ENCODE measurements at regions of chr13 and their contacts with region 1.

Region 1: DNA sequence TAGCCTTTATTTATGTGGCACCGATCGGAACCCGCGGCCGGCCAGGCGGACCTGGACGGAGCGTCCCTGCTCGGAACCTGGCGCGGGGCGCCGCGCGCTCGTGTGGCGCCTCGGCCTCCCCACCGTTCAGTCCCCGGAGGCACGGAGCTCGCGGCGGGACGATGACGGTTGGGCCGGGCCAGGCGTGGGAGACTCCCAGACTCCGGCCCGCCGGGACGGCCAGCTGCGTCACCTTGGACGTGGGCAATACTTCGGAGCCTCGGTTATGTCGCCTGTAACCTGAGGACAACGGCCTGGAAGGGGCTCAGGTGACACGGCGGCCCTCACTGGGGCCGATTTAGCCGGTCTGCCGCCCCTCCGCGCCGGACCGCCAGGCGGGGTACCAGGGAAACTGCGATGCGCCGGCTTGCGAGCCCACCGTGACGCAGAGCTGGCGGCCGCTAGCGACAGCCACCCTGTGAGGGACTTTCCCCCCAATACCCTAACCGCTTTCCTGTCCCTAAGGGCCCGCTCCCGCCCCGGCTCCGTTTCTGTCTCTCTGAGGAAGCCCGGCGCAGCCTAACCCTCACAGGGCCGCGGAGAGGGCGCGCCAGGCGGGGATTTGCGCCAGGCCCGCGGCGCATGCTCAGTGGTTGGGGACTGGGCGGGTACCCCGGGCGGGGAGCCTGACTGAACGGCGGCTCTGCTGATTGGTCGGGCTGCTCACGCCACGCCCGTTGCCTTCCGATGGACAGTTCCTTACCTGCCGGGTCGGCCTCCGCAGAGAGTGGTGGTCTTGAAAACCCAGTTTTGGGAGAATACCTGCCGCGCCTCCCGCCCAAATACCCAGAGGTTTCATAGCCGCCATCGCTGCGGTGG is 109.5 kb upstream of the DOCK9 start:
- DNase-seq: peak; percentile 92
- ATAC-seq: peak; percentile 81
- H3K4me3 Mint-ChIP-seq: peak overlapping the region; percentile 98
- H3K27ac Mint-ChIP-seq: peak overlapping the region; percentile 96
- H3K4me1 Mint-ChIP-seq: peaks cover 32% of the 10 kb centered on the region
- H3K27me3 Mint-ChIP-seq: peaks cover 2% of the 10 kb centered on the region
- CTCF ChIP-seq: no peak

Region 2: DNA sequence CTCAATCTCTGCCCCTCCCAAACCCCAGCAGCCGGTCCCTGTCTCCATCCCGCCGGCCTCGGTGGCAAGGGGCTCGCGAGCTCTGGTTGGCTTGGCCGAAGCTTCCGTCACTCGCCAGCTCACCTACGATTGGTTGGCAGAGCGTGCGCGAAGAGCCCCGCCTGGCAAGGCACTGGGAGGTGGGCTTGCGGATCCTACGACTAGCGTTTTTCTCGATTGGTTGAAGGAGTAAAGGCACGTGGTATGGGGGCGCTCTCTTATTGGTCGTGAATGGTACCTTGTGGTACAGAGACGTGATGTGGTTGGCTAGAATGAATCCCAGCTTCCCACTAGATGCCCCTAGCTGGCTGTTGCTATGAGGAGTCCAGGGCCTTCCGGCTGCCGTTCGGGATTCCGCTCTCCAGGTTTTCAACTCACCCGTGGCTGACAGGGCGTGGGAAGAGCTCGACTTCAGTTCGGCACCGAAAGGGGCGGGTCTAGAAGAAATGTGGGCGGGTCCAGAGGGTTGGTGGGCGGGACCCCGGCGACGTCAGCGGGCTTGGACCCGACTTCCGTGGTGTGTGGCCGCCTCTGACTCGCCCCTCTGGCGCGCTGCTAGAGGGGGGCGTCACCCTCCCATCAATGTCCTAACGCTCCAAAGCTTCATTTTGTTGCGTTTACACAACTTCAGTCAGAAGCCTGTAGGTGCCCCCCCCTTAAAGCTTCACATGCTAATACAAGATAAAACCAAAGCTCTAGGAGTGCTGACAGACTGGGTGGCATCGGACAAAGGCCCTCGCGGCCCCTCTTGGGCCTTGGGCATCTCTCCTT is 1654.2 kb before region 1 on chr13:
- CTCF ChIA-PET with region 1: no interaction called
- POLR2A ChIA-PET with region 1: no interaction called
- intact Hi-C with region 1: loop called (anchors 5 kb)
- DNase-seq: peak; percentile 99
- ATAC-seq: peak; percentile 73
- H3K4me3 Mint-ChIP-seq: peak overlapping the region; percentile 94
- H3K27ac Mint-ChIP-seq: peak overlapping the region; percentile 97
- H3K4me1 Mint-ChIP-seq: peaks cover 32% of the 10 kb centered on the region
- H3K27me3 Mint-ChIP-seq: no peaks in the 10 kb centered on the region
- CTCF ChIP-seq: no peak

Region 3: DNA sequence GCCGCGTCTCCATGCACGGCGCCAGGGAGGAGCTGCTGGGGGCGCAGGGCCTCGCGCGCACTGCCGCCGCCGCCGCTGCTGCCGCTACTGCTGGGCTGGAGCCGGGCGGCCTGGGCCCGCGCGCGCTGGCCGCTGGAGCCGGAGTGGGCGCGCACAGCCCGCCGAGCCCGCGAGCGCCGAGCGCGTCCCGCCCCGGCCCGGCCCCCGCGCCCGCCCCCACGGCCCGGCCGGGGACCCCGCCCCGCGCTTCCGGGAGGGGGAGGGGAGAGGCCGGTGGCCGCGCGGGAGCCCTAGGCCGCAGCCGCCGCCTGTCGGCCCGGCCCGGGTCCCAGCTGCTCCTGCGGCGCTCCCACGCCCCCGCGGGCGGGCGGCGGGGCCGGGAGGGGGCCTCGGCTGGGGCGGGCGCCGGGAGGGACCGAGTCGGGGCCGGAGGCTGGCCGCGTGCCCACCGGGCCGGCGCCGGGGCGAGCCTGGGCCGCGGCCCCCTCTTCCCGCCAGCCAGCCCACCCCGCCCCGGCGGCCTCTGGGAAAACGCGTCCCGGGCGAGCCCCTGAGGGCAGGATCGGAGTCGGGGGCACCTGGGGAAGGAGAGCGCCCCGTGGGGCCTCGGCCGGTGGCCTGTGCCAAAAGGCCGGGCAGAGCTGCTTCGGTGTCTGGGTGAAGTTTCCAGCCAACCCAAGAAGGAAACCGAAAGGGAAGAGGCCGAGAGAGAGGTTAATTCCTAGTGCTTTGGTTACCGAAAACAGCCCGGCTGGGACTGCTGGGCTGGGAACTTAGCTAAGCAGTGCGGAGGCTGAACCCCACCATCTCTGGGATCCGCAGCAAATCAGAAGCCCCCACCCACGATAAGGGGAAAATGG is 510.1 kb before region 1 on chr13 and contains the start of gene STK24:
- CTCF ChIA-PET with region 1: no interaction called
- POLR2A ChIA-PET with region 1: no interaction called
- intact Hi-C with region 1: loop called (anchors 10 kb)
- DNase-seq: peak; percentile 82
- ATAC-seq: peak; percentile 78
- H3K4me3 Mint-ChIP-seq: peak within 1 kb of the TSS; percentile 88
- H3K27ac Mint-ChIP-seq: peak within 1 kb of the TSS; percentile 91
- H3K4me1 Mint-ChIP-seq: peaks cover 45% of the 10 kb centered on the region
- H3K27me3 Mint-ChIP-seq: no peaks in the 10 kb centered on the region
- CTCF ChIP-seq: no peak
- total RNA-seq, gene STK24: 74.8 and 84.8 TPM in 2 replicates

Region 4: DNA sequence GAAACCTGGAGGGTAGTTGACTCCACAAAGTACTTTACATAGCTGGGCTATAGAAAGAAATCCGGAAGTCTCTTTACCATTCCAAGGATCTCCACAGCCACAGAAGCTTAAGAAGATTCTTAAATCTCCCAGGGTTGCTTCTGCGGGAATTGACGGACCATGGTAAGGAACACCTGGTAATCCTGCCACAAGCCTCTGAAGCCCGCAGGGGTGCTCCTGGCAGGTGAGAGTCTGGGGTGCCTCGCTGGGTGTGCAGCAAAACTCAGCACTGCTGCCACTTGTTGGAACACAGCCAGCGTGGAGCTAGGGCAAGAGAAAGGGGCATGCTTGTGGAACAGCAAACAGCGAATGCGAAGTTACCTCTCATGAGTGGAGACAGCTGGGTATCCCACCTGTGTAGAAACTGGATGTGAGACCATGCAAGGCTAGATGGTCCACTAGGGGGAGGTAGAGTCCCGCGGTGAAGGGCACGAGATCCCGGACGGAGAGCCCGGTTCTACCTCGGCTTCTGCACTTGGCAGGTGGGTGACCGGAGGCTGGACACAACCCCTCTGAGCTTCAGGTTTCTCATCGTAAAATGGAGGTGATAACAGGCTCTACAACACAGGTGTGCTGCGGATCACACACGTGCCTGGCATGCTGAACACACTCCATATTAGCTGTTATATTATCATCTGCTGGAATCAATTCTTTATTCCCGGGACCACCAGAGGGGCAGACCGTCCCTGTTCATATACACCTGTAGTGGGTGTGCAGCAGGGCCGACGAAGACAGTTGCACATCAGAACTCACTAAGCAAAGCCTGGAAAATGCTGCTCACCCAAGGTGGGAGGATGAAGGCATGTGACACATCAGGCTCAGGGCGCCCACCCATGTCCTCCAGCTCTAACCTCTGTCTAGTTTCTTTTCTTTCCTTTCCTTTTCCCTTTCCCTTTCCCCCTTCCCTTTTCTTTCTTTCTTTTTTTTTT is 89.3 kb after region 1 on chr13:
- CTCF ChIA-PET with region 1: interaction called, 6 read pairs
- POLR2A ChIA-PET with region 1: interaction called, 3 read pairs
- intact Hi-C with region 1: loop called (anchors 5 kb)
- DNase-seq: peak; percentile 64
- ATAC-seq: peak; percentile 90
- H3K4me3 Mint-ChIP-seq: peak overlapping the region; percentile 58
- H3K27ac Mint-ChIP-seq: peak overlapping the region; percentile 24
- H3K4me1 Mint-ChIP-seq: peaks cover 43% of the 10 kb centered on the region
- H3K27me3 Mint-ChIP-seq: peaks cover 2% of the 10 kb centered on the region
- CTCF ChIP-seq: no peak

Region 5: GRCh38 chr13:99436686-99437416 is 349.5 kb after region 1 on chr13:
- CTCF ChIA-PET with region 1: interaction called, 3 read pairs
- POLR2A ChIA-PET with region 1: no interaction called
- intact Hi-C with region 1: loop called (anchors 5 kb)
- DNase-seq: peak; percentile 87
- ATAC-seq: peak; percentile 59
- H3K4me3 Mint-ChIP-seq: peak overlapping the region; percentile 66
- H3K27ac Mint-ChIP-seq: peak overlapping the region; percentile 76
- H3K4me1 Mint-ChIP-seq: peaks cover 66% of the 10 kb centered on the region
- H3K27me3 Mint-ChIP-seq: peaks cover 2% of the 10 kb centered on the region
- CTCF ChIP-seq: peak; percentile 99

Region 6: GRCh38 chr13:99980201-99980823 is 893.0 kb after region 1 on chr13:
- CTCF ChIA-PET with region 1: no interaction called
- POLR2A ChIA-PET with region 1: no interaction called
- intact Hi-C with region 1: loop called (anchors 5 kb)
- DNase-seq: no peak
- ATAC-seq: peak; percentile 75
- H3K4me3 Mint-ChIP-seq: no peak overlapping the region
- H3K27ac Mint-ChIP-seq: no peak overlapping the region
- H3K4me1 Mint-ChIP-seq: peaks cover 2% of the 10 kb centered on the region
- H3K27me3 Mint-ChIP-seq: peaks cover 54% of the 10 kb centered on the region
- CTCF ChIP-seq: no peak